ENCODE measurements at regions of chr4 and their contacts with region 1.

Region 1: DNA sequence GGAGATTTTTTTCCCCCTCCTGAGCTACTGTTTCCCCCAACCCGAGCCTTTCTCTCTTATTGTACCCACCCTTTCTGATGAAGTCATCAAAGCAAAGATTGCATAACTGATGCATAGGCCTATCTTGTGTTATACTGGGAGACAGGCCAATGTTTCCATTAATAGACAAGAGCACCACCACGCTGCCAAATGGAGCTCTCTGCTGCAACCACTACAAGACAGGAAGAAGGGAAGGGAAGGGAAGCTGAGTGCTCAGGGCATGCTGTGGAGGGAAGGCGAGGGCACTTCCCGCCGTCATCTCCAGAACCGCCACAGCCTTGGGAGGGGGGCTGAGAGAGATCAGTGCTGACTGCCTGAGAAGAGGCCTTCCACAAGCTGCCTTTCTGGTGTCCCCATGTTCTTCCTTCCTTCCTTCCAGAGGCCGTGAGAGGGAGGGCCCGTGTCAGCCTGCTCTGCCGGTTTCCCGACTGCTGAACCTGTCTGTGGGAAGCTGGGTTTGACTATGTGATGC is 75.0 kb downstream of the MGST2 start:
- DNase-seq: peak; percentile 76 to 88
- ATAC-seq: peak; percentile 96 to 98
- H3K4me3 ChIP-seq: peak overlapping the region; percentile 10 to 50 (median 44)
- H3K27ac ChIP-seq: peak overlapping the region; percentile 80 to 97 (median 92)
- H3K4me1 ChIP-seq: peaks cover 26 to 30% of the 10 kb centered on the region in 2 donors
- H3K27me3 ChIP-seq: no peaks in the 10 kb centered on the region
- CTCF ChIP-seq: peak in 4 of 5 experiments; percentile 2 to 44 (median 30)
- POLR2A ChIP-seq: no peak

Region 2: DNA sequence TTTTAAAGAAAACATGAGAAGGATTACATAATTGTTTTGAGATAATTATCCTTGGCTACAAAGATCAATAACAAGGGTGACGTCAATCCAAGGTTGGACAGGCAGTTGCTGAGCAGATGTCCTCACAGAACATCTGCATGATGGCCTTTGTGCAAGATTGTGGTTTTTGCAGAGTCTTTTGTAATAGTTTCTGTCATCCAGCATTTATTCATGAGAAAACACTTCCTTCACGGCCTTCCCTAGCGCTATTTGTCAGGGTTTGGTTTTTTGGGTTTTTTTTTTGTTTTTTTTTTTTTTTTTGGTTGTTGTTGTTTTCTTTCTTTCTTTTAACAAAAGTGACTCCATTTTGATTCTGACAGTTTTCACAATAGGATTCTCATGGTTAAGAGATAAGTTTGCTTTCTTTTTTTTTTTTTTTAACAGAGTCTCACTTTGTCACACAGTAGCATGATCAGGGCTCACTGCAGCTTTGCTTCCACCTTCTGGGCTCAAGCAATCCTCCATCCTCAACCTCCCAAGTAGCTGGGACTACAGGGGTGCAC is 532.1 kb before region 1 on chr4:
- in situ Hi-C with region 1: no loop called
- intact Hi-C with region 1: no loop called
- DNase-seq: peak; percentile 20 to 54
- ATAC-seq: peak; percentile 85 to 88
- H3K4me3 ChIP-seq: no peak overlapping the region
- H3K27ac ChIP-seq: peak overlapping the region; percentile 41 to 65 (median 61)
- H3K4me1 ChIP-seq: no peaks in the 10 kb centered on the region
- H3K27me3 ChIP-seq: no peaks in the 10 kb centered on the region
- CTCF ChIP-seq: no peak
- POLR2A ChIP-seq: no peak

Region 3: GRCh38 chr4:139763672-139764071 is 23.1 kb after region 1 on chr4:
- in situ Hi-C with region 1: no loop called
- intact Hi-C with region 1: loop called (anchors 1 kb)
- DNase-seq: peak in 1 of 2 donors; percentile 30
- ATAC-seq: peak; percentile 69
- H3K4me3 ChIP-seq: peak overlapping the region in 3 of 4 donors; percentile 3 to 31 (median 6)
- H3K27ac ChIP-seq: peak overlapping the region; percentile 76 to 85 (median 82)
- H3K4me1 ChIP-seq: peaks cover 56 to 59% of the 10 kb centered on the region in 2 donors
- H3K27me3 ChIP-seq: no peaks in the 10 kb centered on the region
- CTCF ChIP-seq: no peak
- POLR2A ChIP-seq: no peak